Breast epithelium (tissue), 4 donors: ENCODE measurements at regions of chr11 and their contacts with region 1.

Region 1: DNA sequence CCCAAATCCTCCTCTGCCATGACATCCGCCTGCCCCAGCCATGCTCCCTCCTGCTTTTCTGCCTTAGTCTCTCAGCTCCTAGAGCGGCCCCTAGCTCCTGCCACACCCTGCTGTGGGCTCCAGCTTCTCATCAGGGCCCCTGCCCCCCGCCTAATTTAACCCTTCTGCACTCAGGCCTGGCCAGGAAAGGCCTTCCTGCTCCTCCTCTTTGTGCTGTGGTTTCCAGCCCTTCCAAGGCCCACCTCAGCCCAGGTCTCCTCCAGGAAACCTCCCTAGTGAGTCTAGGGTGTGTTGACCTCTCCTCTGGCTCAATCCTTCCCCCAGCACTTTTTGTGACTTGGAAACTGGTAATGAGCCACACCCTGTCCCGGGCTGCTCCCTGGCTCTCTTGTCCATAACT is 11.3 kb downstream of the PTPN5 start:
- DNase-seq: no peak
- H3K4me3 ChIP-seq: no peak overlapping the region
- H3K27ac ChIP-seq: no peak overlapping the region
- H3K4me1 ChIP-seq: no peaks in the 10 kb centered on the region
- H3K27me3 ChIP-seq: no peaks in the 10 kb centered on the region
- CTCF ChIP-seq: no peak
- POLR2A ChIP-seq: no peak

Region 2: DNA sequence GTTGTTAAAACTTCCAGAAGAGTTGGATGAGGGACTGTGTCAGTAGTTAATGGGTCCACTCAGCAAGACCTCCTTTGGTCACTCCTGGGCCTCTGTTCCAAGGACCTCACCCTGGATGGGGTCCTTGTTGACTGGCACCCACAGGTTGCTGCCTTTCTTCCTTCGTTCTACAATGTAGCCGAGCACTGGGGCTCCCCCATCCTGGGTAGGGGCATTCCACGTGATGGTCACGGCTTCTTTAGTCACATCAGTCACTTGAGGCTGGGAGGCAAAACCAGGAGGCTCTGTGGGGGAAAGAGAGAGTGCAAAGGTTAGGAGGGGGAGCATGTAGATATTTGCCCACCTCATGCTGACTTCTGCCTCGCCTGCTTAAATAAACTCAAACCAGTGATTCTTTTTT is 69.8 kb before region 1 on chr11:
- intact Hi-C with region 1: no loop called
- DNase-seq: peak in 1 of 2 donors; percentile 35
- H3K4me3 ChIP-seq: no peak overlapping the region
- H3K27ac ChIP-seq: no peak overlapping the region
- H3K4me1 ChIP-seq: peaks cover 0 to 3% of the 10 kb centered on the region in 2 donors
- H3K27me3 ChIP-seq: no peaks in the 10 kb centered on the region
- CTCF ChIP-seq: no peak
- POLR2A ChIP-seq: no peak

Region 3: GRCh38 chr11:18865951-18866350 is 85.6 kb after region 1 on chr11:
- intact Hi-C with region 1: no loop called
- DNase-seq: no peak
- H3K4me3 ChIP-seq: no peak overlapping the region
- H3K27ac ChIP-seq: no peak overlapping the region
- H3K4me1 ChIP-seq: no peaks in the 10 kb centered on the region
- H3K27me3 ChIP-seq: no peaks in the 10 kb centered on the region
- CTCF ChIP-seq: no peak
- POLR2A ChIP-seq: no peak

Region 4: GRCh38 chr11:19284881-19285280 is 504.6 kb after region 1 on chr11:
- intact Hi-C with region 1: loop called (anchors 5 kb)
- DNase-seq: no peak
- H3K4me3 ChIP-seq: no peak overlapping the region
- H3K27ac ChIP-seq: no peak overlapping the region
- H3K4me1 ChIP-seq: no peaks in the 10 kb centered on the region
- H3K27me3 ChIP-seq: no peaks in the 10 kb centered on the region
- CTCF ChIP-seq: no peak
- POLR2A ChIP-seq: no peak